ENCODE measurements at regions of chr17 and their contacts with region 1.

Region 1: DNA sequence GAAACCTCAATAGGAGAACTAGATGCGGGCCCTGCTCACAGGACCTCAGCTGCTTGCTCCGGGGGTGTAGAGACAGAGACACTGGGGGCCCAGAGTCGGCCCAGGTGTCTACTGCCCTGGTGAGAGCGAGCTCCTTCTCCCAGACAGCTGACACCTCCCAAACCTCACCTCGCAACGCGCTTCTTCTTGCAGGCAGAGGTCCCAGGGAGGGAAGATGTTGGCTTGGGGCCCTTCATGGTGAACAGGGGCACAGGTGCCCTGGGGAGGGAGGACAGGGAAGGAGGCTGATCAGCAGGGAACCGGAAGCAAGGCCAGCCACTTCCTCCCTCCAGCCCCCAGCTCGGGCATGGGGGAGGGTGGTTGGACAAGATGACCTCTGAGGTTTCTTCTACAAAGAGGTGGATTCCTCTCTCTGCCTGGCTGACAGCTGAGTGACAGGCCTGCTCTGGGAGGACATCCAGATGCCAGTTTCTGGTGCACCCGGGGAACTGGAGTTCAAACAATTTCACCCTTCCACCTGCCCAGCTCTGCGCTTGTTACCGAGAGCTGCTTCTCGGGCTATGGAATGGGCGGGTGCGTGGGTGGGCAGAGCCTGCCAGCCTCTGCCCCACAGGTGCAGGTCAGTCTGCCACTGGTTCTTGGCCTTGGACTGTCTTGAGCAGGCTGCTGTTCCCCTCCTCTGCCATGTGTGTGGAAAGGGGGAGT is 11.7 kb upstream of the GFAP start:
- DNase-seq: peak in 1 of 2 donors; percentile 5
- ATAC-seq: no peak
- H3K4me3 ChIP-seq: no peak overlapping the region
- H3K27ac ChIP-seq: no peak overlapping the region
- H3K4me1 ChIP-seq: peaks cover 0 to 6% of the 10 kb centered on the region in 2 donors
- H3K27me3 ChIP-seq: no peaks in the 10 kb centered on the region
- CTCF ChIP-seq: no peak
- POLR2A ChIP-seq: no peak

Region 2: DNA sequence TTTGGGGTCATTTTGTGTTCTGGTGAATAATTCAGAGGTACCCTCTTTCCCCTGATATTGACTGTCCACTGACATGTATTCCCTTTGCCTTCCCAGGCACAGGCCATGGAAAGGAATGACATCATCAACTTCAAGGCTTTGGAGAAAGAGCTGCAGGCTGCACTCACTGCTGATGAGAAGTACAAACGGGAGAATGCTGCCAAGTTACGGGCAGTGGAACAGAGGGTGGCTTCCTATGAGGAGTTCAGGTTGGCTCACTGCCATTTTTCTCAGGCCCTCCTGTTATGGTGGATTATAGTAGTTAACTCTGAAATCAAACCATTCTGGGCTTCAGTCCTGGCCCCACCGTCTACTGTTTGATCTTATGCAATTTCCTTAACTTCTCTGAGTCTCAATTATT is 26.1 kb before region 1 on chr17:
- in situ Hi-C with region 1: no loop called
- intact Hi-C with region 1: no loop called
- DNase-seq: no peak
- ATAC-seq: no peak
- H3K4me3 ChIP-seq: no peak overlapping the region
- H3K27ac ChIP-seq: no peak overlapping the region
- H3K4me1 ChIP-seq: peaks cover 20 to 23% of the 10 kb centered on the region in 2 donors
- H3K27me3 ChIP-seq: no peaks in the 10 kb centered on the region
- CTCF ChIP-seq: no peak
- POLR2A ChIP-seq: no peak

Region 3: GRCh38 chr17:45013021-45013997 is 86.3 kb after region 1 on chr17:
- in situ Hi-C with region 1: loop called in 2 of 4 experiments (anchors 5 to 10 kb)
- intact Hi-C with region 1: no loop called
- DNase-seq: no peak
- ATAC-seq: no peak
- H3K4me3 ChIP-seq: no peak overlapping the region
- H3K27ac ChIP-seq: no peak overlapping the region
- H3K4me1 ChIP-seq: peaks cover 0 to 9% of the 10 kb centered on the region in 2 donors
- H3K27me3 ChIP-seq: no peaks in the 10 kb centered on the region
- CTCF ChIP-seq: no peak
- POLR2A ChIP-seq: no peak

Region 4: GRCh38 chr17:45021607-45022287 is 94.8 kb after region 1 on chr17:
- in situ Hi-C with region 1: loop called in 2 of 4 experiments (anchors 5 to 10 kb)
- intact Hi-C with region 1: no loop called
- DNase-seq: peak; percentile 23 to 47
- ATAC-seq: peak; percentile 70 to 81
- H3K4me3 ChIP-seq: peak overlapping the region; percentile 50 to 83 (median 54)
- H3K27ac ChIP-seq: peak overlapping the region; percentile 32 to 66 (median 64)
- H3K4me1 ChIP-seq: peaks cover 16 to 17% of the 10 kb centered on the region in 2 donors
- H3K27me3 ChIP-seq: no peaks in the 10 kb centered on the region
- CTCF ChIP-seq: peak; percentile 71 to 97 (median 96)
- POLR2A ChIP-seq: no peak